Dorsolateral prefrontal cortex (tissue), 120 donors: ENCODE measurements at regions of chr10 and their contacts with region 1.

Region 1: DNA sequence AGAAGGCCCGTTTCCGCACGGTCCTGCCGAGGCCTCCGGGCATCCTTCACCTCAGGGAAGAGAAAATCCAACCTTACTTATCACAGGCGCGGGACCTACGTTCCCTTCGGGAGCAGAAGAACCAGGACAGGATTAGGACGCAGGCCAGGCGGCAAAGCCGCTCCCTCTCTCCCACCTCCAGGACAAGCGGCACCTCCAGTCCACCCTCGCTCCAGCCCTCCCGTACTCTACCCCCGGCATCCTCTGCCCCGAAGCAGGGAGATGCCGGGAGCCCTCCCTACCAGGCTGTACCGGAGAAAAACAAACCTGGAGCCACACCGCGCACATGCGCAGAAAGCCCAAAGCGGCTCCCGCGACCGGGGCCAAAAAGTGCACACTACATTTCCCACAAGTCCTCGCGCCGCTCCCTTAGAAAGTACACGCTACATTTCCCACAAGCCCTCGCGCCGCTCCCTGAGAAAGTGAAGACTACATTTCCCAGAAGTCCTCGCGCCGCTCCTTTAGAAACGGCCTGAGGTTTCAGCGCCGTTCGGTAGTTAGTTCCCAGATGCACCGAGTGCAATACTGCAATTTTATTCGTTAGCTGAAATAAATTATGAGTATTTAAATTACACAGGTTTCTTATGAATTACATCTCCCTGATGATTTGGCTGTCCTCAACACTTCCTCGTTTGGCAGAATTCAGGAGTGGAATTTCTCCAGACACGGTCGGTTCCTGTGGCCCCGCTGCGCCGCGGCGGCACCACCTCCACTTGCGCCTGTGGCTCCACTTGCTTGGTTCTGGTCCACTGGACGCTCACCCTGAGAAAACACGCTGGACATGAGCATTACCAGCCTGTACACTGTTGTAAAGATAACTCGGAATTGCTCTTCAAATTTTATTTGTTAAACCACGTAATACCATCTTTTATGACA is 85.6 kb downstream of the ZNF33B start:
- DNase-seq: peak; percentile 93 to 98 (median 96)
- H3K4me3 ChIP-seq: peak overlapping the region; percentile 58 to 98 (median 88)
- H3K27ac ChIP-seq: peak overlapping the region in 56 of 59 donors; percentile 38 to 92 (median 78)
- H3K27me3 ChIP-seq: no peaks in the 10 kb centered on the region
- CTCF ChIP-seq: peak in 35 of 56 donors; percentile 15 to 55 (median 33)

Region 2: GRCh38 chr10:42367532-42368230 is 185.1 kb before region 1 on chr10:
- intact Hi-C with region 1: loop called in 1 of 2 experiments (anchors 10 kb)
- DNase-seq: peak; percentile 60 to 95 (median 88)
- H3K4me3 ChIP-seq: peak overlapping the region; percentile 29 to 86 (median 69)
- H3K27ac ChIP-seq: peak overlapping the region in 29 of 59 donors; percentile 7 to 83 (median 46)
- H3K27me3 ChIP-seq: peaks cover 0 to 10% (median 0%) of the 10 kb centered on the region in 45 donors
- CTCF ChIP-seq: peak in 13 of 56 donors; percentile 6 to 27 (median 13)

Region 3: GRCh38 chr10:42532996-42533395 is 19.8 kb before region 1 on chr10:
- intact Hi-C with region 1: no loop called
- DNase-seq: no peak
- H3K4me3 ChIP-seq: no peak overlapping the region
- H3K27ac ChIP-seq: no peak overlapping the region
- H3K27me3 ChIP-seq: no peaks in the 10 kb centered on the region
- CTCF ChIP-seq: no peak

Region 4: DNA sequence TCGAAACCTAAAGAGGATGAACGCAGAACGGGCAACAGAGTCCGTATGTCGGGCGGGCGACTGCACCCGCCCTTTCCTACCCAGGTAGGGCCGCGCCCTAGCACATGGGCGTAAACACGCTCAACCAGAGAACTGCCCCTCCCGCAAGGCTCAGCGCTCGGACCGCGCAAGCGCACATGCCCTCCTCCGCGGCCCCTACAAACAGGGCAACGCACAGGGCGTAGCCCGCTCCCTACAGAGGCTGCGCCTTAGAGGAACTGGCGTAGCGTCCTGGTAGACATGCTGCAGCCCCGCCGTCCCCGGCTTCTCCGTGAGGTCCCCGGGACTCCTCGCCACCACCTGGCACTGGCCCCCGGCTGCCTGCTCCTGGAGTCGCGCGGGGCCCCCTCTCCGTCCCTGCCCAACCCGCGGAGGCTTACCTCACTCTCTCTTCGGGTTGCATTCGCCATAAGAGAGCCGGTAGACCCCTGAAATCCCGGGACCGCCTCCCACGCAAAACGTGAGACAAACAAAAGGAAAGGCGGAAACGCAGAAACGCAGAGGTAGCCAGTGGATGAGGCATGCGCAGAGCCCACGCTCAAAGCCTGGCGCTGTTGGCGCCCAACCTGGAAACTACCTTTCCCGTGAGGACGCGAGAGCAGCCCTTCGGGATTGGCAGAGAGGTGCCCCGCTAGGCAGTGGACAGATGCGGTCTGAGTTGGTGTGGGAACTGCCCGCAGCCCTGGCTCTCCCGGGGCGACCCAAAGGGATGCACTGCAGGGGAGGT is 85.5 kb after region 1 on chr10 and contains the start of gene ZNF33B:
- intact Hi-C with region 1: loop called (anchors 2 kb)
- DNase-seq: peak; percentile 74 to 96 (median 92)
- H3K4me3 ChIP-seq: peak within 1 kb of the TSS; percentile 54 to 99 (median 85)
- H3K27ac ChIP-seq: peak within 1 kb of the TSS in 58 of 59 donors; percentile 15 to 97 (median 89)
- H3K27me3 ChIP-seq: no peaks in the 10 kb centered on the region
- CTCF ChIP-seq: peak in 5 of 56 donors; percentile 3 to 36 (median 12)
- total RNA-seq, gene ZNF33B: 11.0 to 35.5 (median 21.0) TPM

Region 5: GRCh38 chr10:42782446-42783180 is 229.9 kb after region 1 on chr10 and contains the start of gene BMS1:
- intact Hi-C with region 1: loop called (anchors 2 to 5 kb)
- DNase-seq: peak; percentile 80 to 94 (median 92)
- H3K4me3 ChIP-seq: peak within 1 kb of the TSS; percentile 58 to 96 (median 81)
- H3K27ac ChIP-seq: peak within 1 kb of the TSS; percentile 81 to 99 (median 95)
- H3K27me3 ChIP-seq: peaks cover 0 to 2% (median 0%) of the 10 kb centered on the region in 45 donors
- CTCF ChIP-seq: peak in 28 of 56 donors; percentile 10 to 48 (median 25)
- total RNA-seq, gene BMS1: 9.9 to 20.8 (median 15.8) TPM

Region 6: DNA sequence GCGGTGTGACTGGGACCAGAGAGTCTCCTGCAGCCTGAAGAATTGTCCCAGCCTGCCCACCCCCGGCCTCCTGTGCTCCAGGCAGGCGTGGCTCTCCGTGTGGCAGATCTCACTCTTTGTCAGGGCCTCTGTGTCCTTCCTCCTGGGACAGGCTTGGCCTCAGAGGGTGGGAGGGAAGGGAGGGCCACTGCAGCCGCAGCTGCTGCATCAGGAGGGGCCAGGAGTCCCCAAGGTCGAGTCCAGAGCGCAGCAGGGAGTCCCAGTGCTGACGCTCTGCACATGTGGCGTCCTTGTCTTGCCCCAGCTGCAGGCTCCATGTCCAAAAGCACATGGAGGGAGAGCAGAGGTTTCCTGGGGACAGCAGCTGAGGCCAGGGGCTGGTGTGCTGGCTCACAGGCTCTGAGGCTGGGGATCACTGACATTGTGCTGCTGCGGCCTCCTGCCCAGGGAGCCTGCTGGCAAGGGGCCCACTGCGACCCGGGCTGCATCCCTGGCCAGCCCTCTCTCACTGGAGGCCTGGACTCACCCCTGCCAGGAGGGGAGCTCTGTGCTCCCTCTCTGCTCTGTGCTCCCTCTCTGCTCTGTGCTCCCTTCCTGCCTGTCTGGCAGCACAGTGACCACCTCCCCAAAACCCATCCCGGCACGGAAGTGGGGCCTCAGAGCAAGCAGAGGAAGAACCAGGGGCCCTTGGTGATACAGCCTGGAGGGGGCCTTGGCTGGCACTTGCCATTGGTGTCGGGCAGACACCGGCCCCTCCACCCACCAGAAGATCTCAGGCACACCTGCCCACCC is 409.6 kb after region 1 on chr10:
- intact Hi-C with region 1: no loop called
- DNase-seq: peak in 7 of 10 donors; percentile 13 to 38 (median 25)
- H3K4me3 ChIP-seq: no peak overlapping the region
- H3K27ac ChIP-seq: no peak overlapping the region
- H3K27me3 ChIP-seq: peaks cover 0 to 5% (median 0%) of the 10 kb centered on the region in 45 donors
- CTCF ChIP-seq: no peak

Region 7: GRCh38 chr10:43574001-43574892 is 1021.5 kb after region 1 on chr10 and contains the start of gene ZNF239:
- intact Hi-C with region 1: loop called in 1 of 2 experiments (anchors 10 kb)
- DNase-seq: peak; percentile 83 to 93 (median 90)
- H3K4me3 ChIP-seq: peak within 1 kb of the TSS; percentile 55 to 89 (median 77)
- H3K27ac ChIP-seq: peak within 1 kb of the TSS in 50 of 59 donors; percentile 7 to 88 (median 58)
- H3K27me3 ChIP-seq: no peaks in the 10 kb centered on the region
- CTCF ChIP-seq: peak in 30 of 56 donors; percentile 9 to 55 (median 30)
- total RNA-seq, gene ZNF239: 3.7 to 10.3 (median 6.6) TPM

Region 8: DNA sequence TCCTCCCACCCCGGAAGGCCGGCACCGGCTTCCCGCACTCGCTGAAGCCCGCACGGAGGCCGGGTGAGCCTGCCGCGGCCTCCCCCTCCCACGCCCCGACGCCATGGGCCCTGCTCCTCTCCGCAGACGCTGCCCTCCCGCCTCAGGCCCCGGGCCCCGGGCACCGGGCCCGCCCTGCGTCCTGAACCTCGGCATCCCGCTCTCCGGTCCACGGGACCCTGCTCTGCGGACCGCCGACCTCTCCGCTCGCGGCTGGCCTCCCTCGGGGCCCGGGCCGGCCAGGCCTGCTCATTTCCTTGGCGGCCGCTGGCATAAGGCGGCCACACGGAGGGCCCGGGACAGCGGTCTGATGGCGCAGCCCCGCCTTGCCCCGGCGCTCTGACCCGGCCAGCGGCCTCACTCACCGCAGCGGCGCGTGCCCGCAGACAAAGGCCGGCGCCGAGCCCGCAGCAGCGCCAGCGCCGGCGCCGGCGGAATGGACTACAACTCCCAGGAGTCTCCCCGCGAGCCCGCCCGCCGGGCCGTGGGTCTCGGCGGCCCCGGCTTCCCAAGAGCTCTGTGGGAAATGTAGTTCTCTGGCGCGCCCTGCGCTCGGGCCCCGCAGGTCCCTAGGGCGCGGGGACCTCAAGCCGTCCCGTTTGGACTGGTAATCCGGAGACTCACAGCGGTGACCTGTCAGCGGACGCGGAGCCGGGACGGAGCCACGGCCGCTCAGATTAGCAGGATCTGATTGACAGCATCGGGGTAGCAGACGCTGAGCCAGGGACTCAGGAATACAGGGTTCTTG is 1095.8 kb after region 1 on chr10 and contains the start of gene ZNF32:
- intact Hi-C with region 1: loop called in 1 of 2 experiments (anchors 5 kb)
- DNase-seq: peak; percentile 77 to 94 (median 84)
- H3K4me3 ChIP-seq: peak within 1 kb of the TSS; percentile 66 to 99 (median 89)
- H3K27ac ChIP-seq: peak within 1 kb of the TSS in 58 of 59 donors; percentile 56 to 97 (median 89)
- H3K27me3 ChIP-seq: peaks cover 0 to 5% (median 0%) of the 10 kb centered on the region in 45 donors
- CTCF ChIP-seq: peak in 35 of 56 donors; percentile 3 to 58 (median 31)
- total RNA-seq, gene ZNF32: 30.7 to 64.7 (median 43.9) TPM